ENCODE measurements at regions of chr9 and their contacts with region 1.

Region 1: DNA sequence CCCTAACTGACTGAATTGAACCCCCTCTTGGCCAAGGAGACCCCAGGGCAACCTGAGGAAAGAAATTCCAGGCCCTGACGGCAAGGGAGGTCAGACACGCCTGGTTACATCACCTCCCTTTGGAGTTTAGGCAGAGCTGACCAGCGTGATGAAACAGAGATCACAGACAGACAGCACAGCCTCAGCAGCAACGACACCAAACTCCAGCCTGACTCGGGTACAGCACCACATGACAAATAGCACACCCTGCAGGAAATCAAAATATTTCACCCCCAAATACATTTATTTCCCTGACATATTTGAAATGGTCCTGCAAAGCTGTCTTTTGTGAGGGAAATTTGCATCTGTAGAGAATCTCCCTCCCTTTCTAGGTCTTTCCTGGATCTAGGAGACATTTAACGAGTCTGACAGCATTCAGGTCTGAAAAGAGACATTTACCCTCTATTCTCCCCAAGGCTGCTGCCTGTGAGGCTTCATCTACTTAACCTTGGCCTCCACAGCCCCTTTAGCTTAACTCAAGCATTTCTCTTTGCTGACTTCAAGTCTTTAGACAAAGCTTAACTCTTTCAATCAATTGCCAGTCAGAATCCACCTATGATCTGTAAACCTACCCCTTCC is 2.6 kb downstream of the QSOX2 start:
- DNase-seq: no peak
- CTCF ChIP-seq: peak; percentile 2

Region 2: GRCh38 chr9:136225748-136226679 is 17.0 kb before region 1 on chr9:
- CTCF ChIA-PET with region 1: interaction called, 36 read pairs
- POLR2A ChIA-PET with region 1: no interaction called
- DNase-seq: peak; percentile 89
- CTCF ChIP-seq: peak; percentile 94

Measured in GM10248 (cell line).